Activated naive CD4-positive, alpha-beta T cell treated with anti-CD3 and anti-CD28 coated beads for 36 hours (primary cell): ENCODE measurements at regions of chrX and their contacts with region 1.

Region 1: GRCh38 chrX:152958524-152959465 is 35.1 kb downstream of the PNMA5 start:
- DNase-seq: peak; percentile 93
- H3K4me3 Mint-ChIP-seq: peak overlapping the region; percentile 63
- H3K27ac Mint-ChIP-seq: peak overlapping the region; percentile 89
- H3K4me1 Mint-ChIP-seq: peaks cover 3% of the 10 kb centered on the region
- H3K27me3 Mint-ChIP-seq: no peaks in the 10 kb centered on the region

Region 2: DNA sequence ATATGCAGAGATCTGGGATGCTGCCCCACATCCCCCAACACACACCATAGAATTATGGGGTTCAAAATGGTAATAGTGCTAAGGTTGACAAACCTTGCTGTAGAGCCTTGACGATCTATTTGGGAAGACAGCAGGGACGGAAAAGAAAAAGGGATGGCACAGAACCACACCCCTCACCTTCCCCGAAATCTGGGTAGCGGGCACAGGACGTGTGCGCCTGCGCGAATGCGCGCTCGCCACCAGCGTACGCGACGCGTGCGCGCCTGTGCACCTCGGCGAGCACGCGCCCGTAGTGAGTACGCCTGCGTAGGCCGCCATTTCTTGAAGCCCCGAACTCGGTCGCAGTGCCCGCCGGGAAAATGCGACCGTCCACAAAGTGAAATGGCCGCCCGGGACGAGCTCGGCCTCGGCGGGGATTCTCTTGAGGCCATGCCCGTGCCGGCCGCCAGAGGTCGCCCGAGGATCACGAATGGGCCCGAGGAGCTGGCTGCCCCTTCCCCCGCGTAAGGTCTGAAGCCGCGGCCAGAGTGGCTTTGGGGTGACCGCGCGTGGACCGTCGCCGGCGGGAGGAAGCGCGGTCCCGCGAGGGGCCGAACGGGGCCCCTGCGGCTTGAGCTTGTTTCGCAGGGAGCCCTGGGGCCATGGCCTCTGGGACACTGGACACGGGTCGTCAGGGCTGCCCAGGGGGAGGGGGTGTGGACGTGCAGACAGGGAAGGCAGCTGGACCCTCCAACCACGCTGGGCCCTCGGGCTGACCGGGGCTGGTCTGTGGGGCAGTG is 17.3 kb before region 1 on chrX:
- CTCF ChIA-PET with region 1: interaction called, 13 read pairs
- intact Hi-C with region 1: loop called (anchors 1 kb)
- DNase-seq: peak; percentile 90
- H3K4me3 Mint-ChIP-seq: peak overlapping the region; percentile 79
- H3K27ac Mint-ChIP-seq: peak overlapping the region; percentile 76
- H3K4me1 Mint-ChIP-seq: no peaks in the 10 kb centered on the region
- H3K27me3 Mint-ChIP-seq: no peaks in the 10 kb centered on the region

Region 3: DNA sequence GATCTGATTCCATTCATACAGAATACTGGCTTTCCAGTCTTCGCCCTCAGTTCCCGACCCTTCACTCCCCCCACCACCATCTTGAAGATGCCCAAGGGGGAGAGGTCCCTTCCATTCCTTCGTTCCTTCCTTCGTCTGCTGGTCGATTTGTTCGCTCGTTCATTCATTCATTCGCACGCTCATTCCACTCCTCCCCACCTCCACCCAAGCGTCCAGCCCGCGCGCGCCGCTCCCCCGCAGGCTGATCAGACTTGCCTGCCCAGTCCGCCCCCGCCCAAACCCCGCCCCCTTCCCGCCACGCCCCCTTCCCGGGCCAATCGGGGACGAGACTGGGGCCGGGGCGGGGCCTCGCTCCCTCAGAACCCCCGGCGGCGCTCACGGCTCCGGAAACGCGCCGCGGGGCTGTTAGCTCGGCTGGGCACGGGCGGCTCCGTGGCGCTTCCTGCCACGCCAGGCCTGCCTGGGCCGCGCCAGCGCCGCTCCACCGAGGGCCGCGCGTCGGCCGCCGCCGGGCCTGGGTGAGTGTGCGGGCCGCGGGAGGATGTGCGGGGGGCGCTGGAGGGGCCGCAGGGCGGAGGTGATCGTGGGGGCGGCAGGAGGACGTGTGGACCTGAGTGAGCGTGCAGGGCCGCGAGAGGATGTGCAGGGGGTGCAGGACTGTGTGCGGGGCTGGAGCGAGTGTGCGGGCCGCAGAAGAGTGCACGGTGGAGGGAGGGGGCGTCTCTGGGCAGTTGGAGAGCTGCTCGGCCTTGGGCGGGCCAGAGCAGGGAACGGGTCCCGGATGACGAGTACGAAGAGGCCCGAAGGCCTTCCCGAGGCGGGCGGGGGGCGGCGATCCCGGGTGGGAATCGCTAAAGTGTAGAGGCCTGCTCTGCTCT is 375.2 kb after region 1 on chrX and contains the start of gene ZNF275:
- CTCF ChIA-PET with region 1: no interaction called
- intact Hi-C with region 1: loop called (anchors 10 kb)
- DNase-seq: peak; percentile 78
- H3K4me3 Mint-ChIP-seq: peak within 1 kb of the TSS; percentile 85
- H3K27ac Mint-ChIP-seq: peak within 1 kb of the TSS; percentile 80
- H3K4me1 Mint-ChIP-seq: peaks cover 42% of the 10 kb centered on the region
- H3K27me3 Mint-ChIP-seq: no peaks in the 10 kb centered on the region
- total RNA-seq, gene ZNF275: 10.8 to 11.5 TPM

Region 4: GRCh38 chrX:153411255-153411987 is 452.6 kb after region 1 on chrX and contains the start of gene ZFP92:
- CTCF ChIA-PET with region 1: no interaction called
- intact Hi-C with region 1: loop called (anchors 5 kb)
- DNase-seq: peak; percentile 29
- H3K4me3 Mint-ChIP-seq: peak within 1 kb of the TSS; percentile 62
- H3K27ac Mint-ChIP-seq: no peak within 1 kb of the TSS
- H3K4me1 Mint-ChIP-seq: peaks cover 7% of the 10 kb centered on the region
- H3K27me3 Mint-ChIP-seq: no peaks in the 10 kb centered on the region
- total RNA-seq, gene ZFP92: 0.59 to 0.74 TPM

Region 5: GRCh38 chrX:153507484-153508178 is 548.8 kb after region 1 on chrX:
- CTCF ChIA-PET with region 1: interaction called, 5 read pairs
- intact Hi-C with region 1: loop called (anchors 1 kb)
- DNase-seq: peak; percentile 87
- H3K4me3 Mint-ChIP-seq: no peak overlapping the region
- H3K27ac Mint-ChIP-seq: no peak overlapping the region
- H3K4me1 Mint-ChIP-seq: peaks cover 1% of the 10 kb centered on the region
- H3K27me3 Mint-ChIP-seq: no peaks in the 10 kb centered on the region